ENCODE measurements at regions of chr11 and their contacts with region 1.

Region 1: GRCh38 chr11:124875943-124876817 is 10.9 kb downstream of the ROBO3 start:
- DNase-seq: peak; percentile 94
- H3K4me3 ChIP-seq: peak overlapping the region; percentile 73
- H3K27ac ChIP-seq: peak overlapping the region; percentile 97
- H3K27me3 ChIP-seq: peaks cover 21% of the 10 kb centered on the region
- CTCF ChIP-seq: peak; percentile 65

Region 2: GRCh38 chr11:124865921-124866583 is 10.1 kb before region 1 on chr11:
- CTCF ChIA-PET with region 1: interaction called, 43 read pairs
- POLR2A ChIA-PET with region 1: no interaction called
- DNase-seq: no peak
- H3K4me3 ChIP-seq: peak overlapping the region; percentile 31
- H3K27ac ChIP-seq: no peak overlapping the region
- H3K27me3 ChIP-seq: peaks cover 97% of the 10 kb centered on the region
- CTCF ChIP-seq: peak; percentile 73

Region 3: DNA sequence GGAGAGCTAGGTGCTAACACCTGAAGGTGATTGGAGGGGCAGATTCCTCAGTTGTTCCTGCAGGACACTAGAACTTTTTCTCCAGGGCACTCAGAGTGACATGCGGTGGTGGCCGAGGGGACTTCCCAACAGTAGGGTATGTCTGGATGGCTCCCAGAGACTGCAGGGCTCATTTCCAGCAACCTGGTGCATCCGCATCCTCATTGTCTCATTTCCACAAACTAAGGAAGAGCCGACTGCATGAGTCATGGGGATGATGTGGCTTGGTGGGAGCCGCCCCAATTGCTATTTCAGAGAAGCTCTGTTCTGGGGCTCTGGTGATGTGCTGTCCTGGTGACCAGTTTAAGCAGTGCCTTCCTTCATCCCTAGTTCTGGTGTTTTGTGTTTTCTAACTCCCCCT is 24.3 kb after region 1 on chr11:
- CTCF ChIA-PET with region 1: interaction called, 35 read pairs
- POLR2A ChIA-PET with region 1: interaction called, 18 read pairs
- DNase-seq: peak; percentile 68
- H3K4me3 ChIP-seq: peak overlapping the region; percentile 1; the same call in 1 of the 2 replicates
- H3K27ac ChIP-seq: peak overlapping the region; percentile 99
- H3K27me3 ChIP-seq: no peaks in the 10 kb centered on the region
- CTCF ChIP-seq: no peak

Region 4: DNA sequence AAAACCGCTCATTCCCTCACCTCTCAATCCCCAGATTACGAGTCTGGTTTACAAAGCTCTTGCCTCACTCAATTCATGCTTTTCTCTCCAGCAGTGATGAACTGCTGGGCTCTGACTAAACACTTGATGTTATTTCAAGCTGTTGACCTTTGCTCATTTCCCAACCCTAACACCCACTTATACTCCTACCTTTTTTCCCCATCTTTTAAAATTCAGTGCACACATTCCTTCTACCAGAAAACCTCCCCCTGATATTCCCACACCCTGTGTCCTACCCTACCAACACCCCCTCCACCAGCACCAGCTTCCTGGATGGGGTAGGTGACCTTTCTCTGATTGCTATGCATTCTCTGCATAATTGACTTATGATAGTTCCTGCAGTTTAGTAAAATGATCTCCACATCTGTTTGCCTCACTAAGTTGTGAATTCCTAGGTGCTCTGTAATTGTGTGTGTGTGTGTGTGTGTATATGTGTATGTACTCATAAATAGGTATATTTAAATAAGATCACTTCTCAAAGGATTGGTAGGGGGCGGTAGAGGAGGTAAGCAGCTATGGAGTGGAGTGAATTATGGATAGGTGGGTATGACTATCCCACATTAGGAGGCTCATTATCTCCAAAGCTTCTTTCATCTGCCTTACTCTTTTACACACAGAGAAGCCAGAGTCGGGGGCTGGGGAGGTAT is 58.8 kb after region 1 on chr11:
- CTCF ChIA-PET with region 1: interaction called, 32 read pairs
- POLR2A ChIA-PET with region 1: interaction called, 18 read pairs
- DNase-seq: peak; percentile 86
- H3K4me3 ChIP-seq: no peak overlapping the region; the same call in 1 of the 2 replicates
- H3K27ac ChIP-seq: peak overlapping the region; percentile 94
- H3K27me3 ChIP-seq: no peaks in the 10 kb centered on the region
- CTCF ChIP-seq: peak; percentile 52

Region 5: DNA sequence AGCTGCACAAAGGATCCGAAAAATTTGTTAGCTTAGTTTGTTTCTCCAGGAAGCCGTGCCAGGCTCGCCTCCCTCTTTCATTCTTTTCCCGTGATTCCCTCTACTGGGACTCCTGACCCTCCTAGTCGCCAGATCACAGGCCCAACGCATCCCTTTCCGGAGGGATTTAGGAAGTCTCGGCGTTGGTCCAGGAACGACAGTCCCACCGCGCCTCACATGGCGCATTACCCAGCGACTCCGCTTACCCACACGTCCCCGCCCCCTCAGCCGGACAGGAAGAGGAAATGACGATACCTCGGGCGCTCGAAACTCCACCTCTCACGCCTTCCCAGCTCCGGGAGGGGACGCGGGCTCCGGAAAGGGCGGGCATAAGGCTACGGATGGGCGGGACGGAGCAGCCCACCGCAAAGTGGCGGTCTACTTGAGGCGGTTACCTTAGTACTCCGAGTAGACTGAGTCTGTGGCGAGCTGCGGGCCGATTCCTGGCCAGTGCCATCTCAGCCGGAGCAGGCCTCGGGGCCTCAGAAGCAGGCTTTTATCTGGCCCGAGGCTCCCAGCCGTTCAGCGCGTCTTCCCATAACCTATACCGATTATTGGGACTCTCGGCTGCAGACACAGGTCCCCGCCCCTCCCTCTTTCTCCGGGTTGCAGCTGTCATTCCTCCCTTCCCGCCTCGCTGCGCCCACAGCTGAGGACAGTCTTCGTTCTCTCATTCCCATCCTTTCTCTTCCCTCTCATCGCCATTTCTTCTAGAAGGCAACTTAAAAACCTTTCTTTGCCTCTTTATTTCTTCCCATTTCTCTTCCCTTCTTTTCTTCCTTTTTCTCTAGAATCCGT is 77.8 kb after region 1 on chr11 and contains the start of gene CCDC15:
- CTCF ChIA-PET with region 1: interaction called, 35 read pairs
- POLR2A ChIA-PET with region 1: interaction called, 31 read pairs
- DNase-seq: peak; percentile 92
- H3K4me3 ChIP-seq: peak within 1 kb of the TSS; percentile 61
- H3K27ac ChIP-seq: peak within 1 kb of the TSS; percentile 87
- H3K27me3 ChIP-seq: no peaks in the 10 kb centered on the region
- CTCF ChIP-seq: no peak
- polyA plus RNA-seq, gene CCDC15: 0.73 and 1.1 TPM in 2 replicates

Region 6: DNA sequence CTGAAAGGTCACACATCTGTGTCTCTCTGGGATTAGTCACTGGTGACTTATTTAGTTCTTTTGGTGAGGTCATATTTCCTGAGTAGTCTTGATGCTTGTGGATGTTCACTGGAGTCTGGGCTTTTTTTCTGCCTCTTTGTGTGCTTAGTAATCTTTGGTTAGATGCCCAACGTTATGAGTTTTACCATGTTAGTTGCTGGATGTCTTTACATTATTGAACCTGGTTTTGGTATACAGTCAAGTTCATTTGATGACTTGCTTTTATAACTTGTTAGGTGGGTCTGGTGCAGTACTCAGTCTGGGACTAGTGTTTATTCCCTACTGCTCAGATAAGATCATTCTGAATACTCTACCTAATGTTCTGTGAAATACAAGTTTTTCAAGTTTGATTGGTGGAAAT is 160.8 kb after region 1 on chr11:
- CTCF ChIA-PET with region 1: no interaction called
- POLR2A ChIA-PET with region 1: no interaction called
- DNase-seq: peak; percentile 63
- H3K4me3 ChIP-seq: no peak overlapping the region
- H3K27ac ChIP-seq: no peak overlapping the region
- H3K27me3 ChIP-seq: no peaks in the 10 kb centered on the region
- CTCF ChIP-seq: no peak

Region 7: DNA sequence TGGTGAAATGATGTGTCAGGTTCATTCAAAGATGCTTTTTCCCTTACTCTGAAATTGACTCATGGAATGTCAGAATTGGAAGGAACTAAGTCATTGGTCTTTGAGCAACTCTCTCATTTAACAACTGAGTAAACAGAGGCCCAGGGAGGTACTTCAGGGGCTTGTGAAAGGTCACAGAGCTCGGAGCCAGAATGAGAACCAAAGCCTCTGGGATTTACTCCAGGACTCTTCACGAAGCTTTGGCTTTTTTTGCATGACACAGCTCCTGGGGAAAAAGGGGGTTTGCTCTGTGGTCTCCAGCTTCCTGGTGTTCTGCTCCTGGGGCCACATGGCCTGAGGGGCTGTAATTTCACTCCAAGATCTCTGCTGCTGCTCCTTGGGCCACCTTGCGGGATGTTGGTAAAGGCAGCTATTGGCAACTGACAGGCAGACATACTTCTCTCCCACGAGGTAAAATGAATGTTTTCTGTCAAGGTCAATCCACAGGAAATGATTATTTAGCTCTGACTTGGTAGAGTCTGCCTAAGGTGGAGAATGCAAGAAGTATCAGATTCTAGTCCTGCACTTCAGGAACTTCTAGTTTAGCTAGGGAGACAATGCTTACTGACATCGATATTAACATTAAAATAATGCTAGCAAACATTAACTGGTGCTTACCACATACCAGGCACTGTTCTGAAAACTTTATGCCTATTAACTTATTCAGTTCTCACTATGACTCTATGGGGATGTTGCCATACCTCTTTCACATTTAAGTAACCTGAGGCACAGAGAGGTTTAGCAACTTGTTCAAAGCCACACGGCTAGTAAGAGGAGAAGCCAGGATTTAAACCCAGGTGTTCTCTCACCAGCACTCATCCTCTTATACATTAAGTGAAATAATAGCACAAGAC is 304.5 kb after region 1 on chr11:
- CTCF ChIA-PET with region 1: no interaction called
- POLR2A ChIA-PET with region 1: no interaction called
- DNase-seq: no peak
- H3K4me3 ChIP-seq: no peak overlapping the region
- H3K27ac ChIP-seq: peak overlapping the region; percentile 39
- H3K27me3 ChIP-seq: peaks cover 13% of the 10 kb centered on the region
- CTCF ChIP-seq: no peak

Measured in AG04450 (cell line).